HepG2 (cell line): ENCODE measurements at regions of chr2 and their contacts with region 1.

Region 1: DNA sequence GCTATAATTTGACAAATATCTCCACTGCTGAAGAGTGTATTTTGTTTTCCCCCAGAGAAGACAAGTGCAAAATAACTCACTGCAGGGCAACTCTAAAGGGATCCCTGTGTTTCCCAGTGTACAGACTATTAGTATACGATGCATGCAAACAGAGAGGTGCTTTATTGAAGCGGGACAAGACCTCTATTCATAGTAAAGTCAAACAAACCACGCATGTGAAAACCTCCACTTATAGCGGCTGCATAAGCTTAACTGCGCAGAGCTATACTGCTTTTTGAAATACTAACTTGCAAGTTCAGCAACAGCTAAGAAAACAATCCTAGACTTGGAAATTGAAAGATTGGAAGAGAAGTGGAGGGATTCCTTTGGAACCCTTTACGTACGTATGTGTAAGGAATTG is 15.6 kb downstream of the RNF144A start:
- DNase-seq: peak; percentile 59
- ATAC-seq: peak; percentile 53
- H3K4me3 ChIP-seq: no peak overlapping the region
- H3K27ac ChIP-seq: no peak overlapping the region
- H3K4me1 ChIP-seq: peaks cover 27% of the 10 kb centered on the region
- H3K27me3 ChIP-seq: no peaks in the 10 kb centered on the region
- CTCF ChIP-seq: no peak
- EP300 ChIP-seq: no peak
- POLR2A ChIP-seq: no peak
- RAD21 ChIP-seq: no peak

Region 2: DNA sequence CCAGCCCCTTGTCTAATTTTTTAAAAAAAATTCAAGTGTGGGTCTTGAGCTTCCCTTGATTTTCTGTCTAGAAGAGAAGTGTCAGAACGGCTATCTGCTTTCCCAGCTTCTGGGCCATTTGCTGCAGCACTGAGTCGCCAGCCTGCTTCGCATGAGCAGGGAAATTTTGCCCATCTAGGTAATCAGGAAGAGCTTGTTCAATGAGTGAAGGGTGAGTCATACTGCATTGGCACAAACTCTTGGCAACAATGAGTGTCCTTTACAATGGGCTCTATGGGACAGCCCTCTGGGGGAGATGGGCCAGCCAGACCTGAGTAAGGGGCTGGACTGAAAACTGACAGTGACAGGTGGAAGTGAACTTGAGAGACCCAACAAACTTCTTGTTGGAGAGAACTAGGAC is 18.0 kb before region 1 on chr2:
- CTCF ChIA-PET with region 1: no interaction called
- POLR2A ChIA-PET with region 1: no interaction called
- in situ Hi-C with region 1: no loop called
- intact Hi-C with region 1: loop called (anchors 2 kb)
- DNase-seq: no peak
- ATAC-seq: no peak
- H3K4me3 ChIP-seq: no peak overlapping the region
- H3K27ac ChIP-seq: no peak overlapping the region
- H3K4me1 ChIP-seq: peaks cover 51% of the 10 kb centered on the region
- H3K27me3 ChIP-seq: peaks cover 1 to 25% of the 10 kb centered on the region in 2 experiments; a peak in 3 of 5 replicates
- CTCF ChIP-seq: no peak
- EP300 ChIP-seq: no peak
- POLR2A ChIP-seq: no peak
- RAD21 ChIP-seq: no peak